ENCODE measurements at regions of chr20 and their contacts with region 1.

Region 1: DNA sequence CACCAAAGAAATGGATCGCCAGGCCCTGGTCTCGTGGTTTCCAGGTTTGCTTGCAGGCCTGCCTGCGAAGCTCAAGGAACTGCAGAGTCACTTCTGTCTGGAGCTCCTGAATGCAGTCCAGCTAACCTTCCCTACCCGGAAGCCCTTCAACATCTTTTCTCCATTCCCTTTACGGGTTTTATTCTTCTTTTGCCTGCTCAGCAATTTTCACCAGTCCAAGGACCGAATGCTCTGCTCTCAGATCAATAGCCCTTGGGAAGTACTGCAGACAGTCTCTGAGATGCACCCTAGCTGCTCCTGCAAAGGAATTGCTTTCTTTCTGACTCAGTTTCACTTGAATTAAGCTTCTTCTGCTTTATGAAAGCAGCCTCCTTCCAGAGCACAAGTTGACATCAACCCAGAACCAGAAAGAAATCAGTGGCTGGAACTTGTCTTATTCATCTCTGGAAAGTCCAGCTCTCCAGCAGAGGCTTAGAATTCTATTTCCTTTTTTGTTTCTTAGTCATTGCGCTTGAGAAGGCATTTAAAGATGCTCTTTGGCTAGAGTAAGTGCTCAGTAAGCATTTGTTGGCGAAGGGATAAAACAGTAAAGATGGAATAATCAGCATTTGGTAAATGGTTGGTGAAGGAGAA is 18.7 kb upstream of the YWHAB start:
- DNase-seq: no peak
- H3K4me3 ChIP-seq: no peak overlapping the region
- H3K4me1 ChIP-seq: peaks cover 2% of the 10 kb centered on the region
- H3K27me3 ChIP-seq: peaks cover 11% of the 10 kb centered on the region

Region 2: GRCh38 chr20:44231713-44232468 is 634.9 kb before region 1 on chr20:
- in situ Hi-C with region 1: no loop called
- DNase-seq: no peak
- H3K4me3 ChIP-seq: no peak overlapping the region
- H3K4me1 ChIP-seq: no peaks in the 10 kb centered on the region
- H3K27me3 ChIP-seq: no peaks in the 10 kb centered on the region

Region 3: GRCh38 chr20:44688053-44688625 is 178.7 kb before region 1 on chr20:
- in situ Hi-C with region 1: loop called (anchors 5 kb)
- DNase-seq: no peak
- H3K4me3 ChIP-seq: no peak overlapping the region
- H3K4me1 ChIP-seq: peaks cover 5% of the 10 kb centered on the region
- H3K27me3 ChIP-seq: no peaks in the 10 kb centered on the region

Region 4: DNA sequence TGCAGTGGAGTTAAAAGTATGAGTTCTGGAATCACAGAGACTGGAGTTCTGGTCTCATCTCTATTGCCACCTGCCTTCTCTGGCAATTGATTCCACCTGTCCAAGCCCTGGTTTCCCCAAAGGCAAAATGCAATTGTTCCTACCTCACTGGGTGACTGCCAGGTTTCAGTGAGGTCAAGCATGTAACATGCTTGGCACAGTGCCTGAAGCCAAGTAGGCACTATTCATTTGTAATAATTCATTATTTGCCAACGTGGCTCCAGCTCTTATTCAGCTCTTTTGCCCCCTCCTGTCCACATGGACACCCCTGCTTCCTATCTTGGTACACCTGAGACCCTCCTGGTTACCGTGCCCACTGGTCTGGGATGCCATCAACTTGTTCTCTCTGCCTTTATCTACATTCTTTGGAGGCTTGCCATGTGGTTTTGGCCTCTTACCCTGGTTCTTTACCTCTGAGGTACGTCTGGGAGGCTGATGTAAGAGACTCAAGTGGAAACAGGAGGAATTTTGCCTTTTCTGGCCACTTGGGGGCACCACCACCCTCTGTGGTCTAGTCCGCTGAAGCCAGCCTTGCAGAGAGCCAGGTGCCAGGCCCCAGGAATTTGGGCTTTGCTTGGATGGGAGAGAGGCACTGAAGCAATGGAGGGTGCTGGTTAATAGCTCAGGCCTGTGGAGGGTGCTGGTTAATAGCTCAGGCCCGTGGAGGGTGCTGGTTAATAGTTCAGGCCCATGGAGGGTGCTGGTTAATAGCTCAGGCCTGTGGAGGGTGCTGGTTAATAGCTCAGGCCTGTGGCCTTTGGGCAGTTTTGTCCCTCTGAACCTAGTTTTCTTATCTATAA is 119.4 kb before region 1 on chr20:
- in situ Hi-C with region 1: loop called (anchors 5 kb)
- DNase-seq: peak; percentile 68 to 91
- H3K4me3 ChIP-seq: no peak overlapping the region
- H3K4me1 ChIP-seq: peaks cover 10% of the 10 kb centered on the region
- H3K27me3 ChIP-seq: no peaks in the 10 kb centered on the region

Region 5: DNA sequence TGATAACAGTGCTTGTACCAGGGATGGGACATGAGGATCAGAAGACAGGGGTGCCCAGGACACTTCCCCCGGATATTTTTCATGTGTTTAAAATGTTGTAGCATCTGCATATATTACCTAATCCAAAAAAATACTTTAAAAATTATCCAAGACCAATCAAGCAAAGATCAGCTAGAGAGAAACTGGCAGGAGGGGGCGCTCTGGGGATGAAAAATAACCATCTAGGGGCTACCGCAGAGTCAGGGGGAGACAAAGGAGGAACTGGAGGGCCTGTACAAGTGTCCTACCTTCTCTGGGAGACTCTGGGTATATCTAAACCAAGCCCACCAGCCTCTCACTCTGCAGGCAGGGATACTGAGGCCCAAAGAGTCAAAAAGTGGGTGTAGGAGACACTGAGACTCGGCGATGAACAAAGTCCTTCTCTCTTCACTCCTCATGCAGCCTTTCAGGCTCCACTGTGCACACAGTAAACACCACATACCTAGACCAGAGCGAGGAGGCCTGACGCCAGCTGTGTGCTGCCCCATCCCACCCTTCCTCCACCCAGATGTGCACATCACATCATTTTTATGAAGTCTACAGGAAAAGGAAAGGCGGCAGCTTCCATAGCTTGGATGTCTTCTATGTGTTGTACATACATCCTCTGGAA is 66.3 kb before region 1 on chr20:
- in situ Hi-C with region 1: loop called (anchors 5 kb)
- DNase-seq: peak in 1 of 2 experiments; percentile 72
- H3K4me3 ChIP-seq: no peak overlapping the region
- H3K4me1 ChIP-seq: no peaks in the 10 kb centered on the region
- H3K27me3 ChIP-seq: no peaks in the 10 kb centered on the region